ENCODE measurements at regions of chr7 and their contacts with region 1.

Region 1: GRCh38 chr7:27179503-27180430 is 5.3 kb downstream of the HOXA11 start:
- DNase-seq: peak; percentile 84
- H3K27ac ChIP-seq: peak overlapping the region; percentile 89
- CTCF ChIP-seq: peak; percentile 98

Region 2: GRCh38 chr7:27168265-27168947 is 11.4 kb before region 1 on chr7:
- CTCF ChIA-PET with region 1: interaction called, 30 read pairs
- POLR2A ChIA-PET with region 1: interaction called, 4 read pairs
- DNase-seq: no peak
- H3K27ac ChIP-seq: peak overlapping the region; percentile 96
- CTCF ChIP-seq: peak; percentile 52; the same call in 1 of the 2 replicates

Region 3: DNA sequence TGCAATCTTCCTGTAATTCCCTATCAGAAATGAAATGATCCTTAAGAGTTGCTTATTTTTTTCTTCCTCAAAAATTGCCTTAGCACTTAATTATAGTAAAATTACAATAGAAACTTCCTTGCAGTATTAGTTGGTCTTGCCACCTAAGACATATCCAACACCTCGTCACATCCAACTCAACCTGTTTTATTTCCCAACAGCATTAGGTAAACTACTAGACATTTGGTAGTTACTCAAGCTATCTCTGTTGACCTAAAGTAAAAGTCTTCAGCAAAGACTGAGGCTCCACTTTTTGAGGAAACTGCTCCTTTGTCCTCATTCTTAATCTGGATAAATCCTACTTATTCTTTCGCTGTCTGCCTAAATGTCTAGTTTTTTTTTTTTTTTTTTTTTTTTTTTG is 462.5 kb after region 1 on chr7:
- CTCF ChIA-PET with region 1: interaction called, 5 read pairs
- POLR2A ChIA-PET with region 1: interaction called, 11 read pairs
- DNase-seq: no peak
- H3K27ac ChIP-seq: peak overlapping the region; percentile 67
- CTCF ChIP-seq: no peak